Panc1 (cell line): ENCODE measurements at regions of chr1 and their contacts with region 1.

Region 1: GRCh38 chr1:31127266-31127665 is 61.7 kb upstream of the PUM1 start:
- DNase-seq: no peak
- ATAC-seq: no peak
- H3K4me3 ChIP-seq: no peak overlapping the region
- H3K27ac ChIP-seq: no peak overlapping the region
- H3K4me1 ChIP-seq: no peaks in the 10 kb centered on the region
- H3K27me3 ChIP-seq: no peaks in the 10 kb centered on the region
- CTCF ChIP-seq: no peak

Region 2: DNA sequence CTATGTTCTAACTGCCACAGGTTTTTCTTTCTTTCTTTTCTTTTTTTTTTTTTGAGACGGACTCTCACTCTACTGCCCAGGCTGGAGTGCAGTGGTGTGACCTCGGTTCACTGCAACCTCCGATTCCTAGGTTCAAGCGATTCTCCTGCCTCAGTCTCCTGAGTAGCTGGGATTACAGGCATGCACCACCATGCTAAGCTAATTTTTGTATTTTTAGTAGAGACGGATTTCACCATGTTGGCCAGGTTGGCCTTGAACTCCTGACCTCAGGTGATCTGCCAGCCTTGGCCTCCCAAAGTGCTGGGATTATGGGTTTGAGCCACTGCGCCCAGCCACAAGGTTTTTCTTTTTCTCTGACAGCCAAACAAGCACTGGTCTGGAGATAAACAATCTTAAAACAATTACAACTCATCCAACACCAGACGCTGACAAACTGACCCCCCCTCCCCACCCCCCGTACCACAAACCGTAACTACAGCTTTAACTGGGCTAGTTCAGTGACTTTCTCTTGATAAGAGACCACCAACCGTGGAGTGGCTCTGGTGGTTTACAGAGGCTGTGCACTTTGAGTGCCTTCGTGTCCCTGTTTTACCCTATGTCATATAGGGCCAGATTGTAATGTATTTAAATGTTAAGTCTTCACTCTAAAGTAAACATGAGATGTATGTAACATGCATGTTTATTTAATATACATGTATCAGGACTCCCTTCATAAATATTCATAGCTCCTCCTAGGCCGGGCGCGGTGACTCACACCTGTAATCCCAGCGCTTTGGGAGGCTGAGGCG is 42.3 kb before region 1 on chr1:
- CTCF ChIA-PET with region 1: no interaction called
- POLR2A ChIA-PET with region 1: interaction called, 10 read pairs
- in situ Hi-C with region 1: no loop called
- intact Hi-C with region 1: no loop called
- DNase-seq: no peak
- ATAC-seq: no peak
- H3K4me3 ChIP-seq: no peak overlapping the region
- H3K27ac ChIP-seq: no peak overlapping the region
- H3K4me1 ChIP-seq: no peaks in the 10 kb centered on the region
- H3K27me3 ChIP-seq: no peaks in the 10 kb centered on the region
- CTCF ChIP-seq: no peak

Region 3: GRCh38 chr1:31605908-31606427 is 478.7 kb after region 1 on chr1:
- CTCF ChIA-PET with region 1: no interaction called
- POLR2A ChIA-PET with region 1: no interaction called
- in situ Hi-C with region 1: no loop called
- intact Hi-C with region 1: no loop called
- DNase-seq: no peak
- ATAC-seq: no peak
- H3K4me3 ChIP-seq: no peak overlapping the region
- H3K27ac ChIP-seq: no peak overlapping the region
- H3K4me1 ChIP-seq: no peaks in the 10 kb centered on the region
- H3K27me3 ChIP-seq: no peaks in the 10 kb centered on the region; the same call in 1 of the 2 replicates
- CTCF ChIP-seq: no peak